Calu3 (cell line): ENCODE measurements at regions of chr21 and their contacts with region 1.

Region 1: DNA sequence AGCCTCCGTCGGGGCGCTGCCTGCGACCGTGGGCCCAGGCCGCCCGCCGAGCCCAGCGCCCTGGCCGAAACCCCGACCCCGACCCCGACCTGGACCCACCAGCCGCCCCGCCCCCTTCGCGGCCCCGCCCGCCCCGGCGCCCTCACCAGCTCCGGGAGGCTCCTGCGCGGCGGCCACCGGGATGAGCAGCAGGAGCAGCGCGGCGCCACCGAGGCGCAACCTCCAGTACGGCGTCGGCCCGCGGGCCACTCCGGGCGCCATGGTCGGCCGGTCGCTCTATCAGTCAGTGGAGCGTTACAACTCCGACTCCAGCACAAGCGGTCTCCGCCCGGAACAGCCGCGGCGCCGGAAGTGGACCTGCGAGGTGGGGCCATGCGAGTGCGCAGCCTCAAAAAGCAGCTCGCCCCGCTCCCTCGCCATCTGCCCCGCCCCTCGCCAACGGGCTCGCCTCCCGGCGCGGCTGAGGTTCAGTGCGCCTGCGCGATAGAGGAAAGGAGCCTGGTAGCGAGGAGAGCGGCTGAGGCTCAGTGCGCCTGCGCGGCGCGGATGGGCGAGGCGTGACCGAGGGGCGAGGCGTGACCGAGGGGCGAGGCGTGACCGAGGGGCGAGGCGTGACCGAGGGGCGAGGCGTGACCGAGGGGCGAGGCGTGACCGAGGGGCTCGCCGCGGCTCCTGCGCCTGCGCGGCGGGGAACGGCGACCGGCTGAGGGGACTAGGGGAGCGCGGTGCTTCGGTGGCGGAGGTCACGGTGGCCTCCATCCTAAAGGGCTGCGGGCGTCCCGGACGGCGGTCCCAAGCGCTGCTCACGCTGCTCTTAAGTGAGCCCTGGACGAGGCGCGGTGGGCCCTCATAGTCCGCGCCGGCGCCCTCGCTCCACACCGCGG is at the start of gene PTTG1IP:
- DNase-seq: peak; percentile 96
- H3K4me3 Mint-ChIP-seq: peak within 1 kb of the TSS; percentile 86
- H3K27ac Mint-ChIP-seq: peak within 1 kb of the TSS; percentile 83
- H3K4me1 Mint-ChIP-seq: peaks cover 27% of the 10 kb centered on the region
- H3K27me3 Mint-ChIP-seq: no peaks in the 10 kb centered on the region
- CTCF ChIP-seq: no peak
- total RNA-seq, gene PTTG1IP: 135 and 136 TPM in 2 replicates

Region 2: DNA sequence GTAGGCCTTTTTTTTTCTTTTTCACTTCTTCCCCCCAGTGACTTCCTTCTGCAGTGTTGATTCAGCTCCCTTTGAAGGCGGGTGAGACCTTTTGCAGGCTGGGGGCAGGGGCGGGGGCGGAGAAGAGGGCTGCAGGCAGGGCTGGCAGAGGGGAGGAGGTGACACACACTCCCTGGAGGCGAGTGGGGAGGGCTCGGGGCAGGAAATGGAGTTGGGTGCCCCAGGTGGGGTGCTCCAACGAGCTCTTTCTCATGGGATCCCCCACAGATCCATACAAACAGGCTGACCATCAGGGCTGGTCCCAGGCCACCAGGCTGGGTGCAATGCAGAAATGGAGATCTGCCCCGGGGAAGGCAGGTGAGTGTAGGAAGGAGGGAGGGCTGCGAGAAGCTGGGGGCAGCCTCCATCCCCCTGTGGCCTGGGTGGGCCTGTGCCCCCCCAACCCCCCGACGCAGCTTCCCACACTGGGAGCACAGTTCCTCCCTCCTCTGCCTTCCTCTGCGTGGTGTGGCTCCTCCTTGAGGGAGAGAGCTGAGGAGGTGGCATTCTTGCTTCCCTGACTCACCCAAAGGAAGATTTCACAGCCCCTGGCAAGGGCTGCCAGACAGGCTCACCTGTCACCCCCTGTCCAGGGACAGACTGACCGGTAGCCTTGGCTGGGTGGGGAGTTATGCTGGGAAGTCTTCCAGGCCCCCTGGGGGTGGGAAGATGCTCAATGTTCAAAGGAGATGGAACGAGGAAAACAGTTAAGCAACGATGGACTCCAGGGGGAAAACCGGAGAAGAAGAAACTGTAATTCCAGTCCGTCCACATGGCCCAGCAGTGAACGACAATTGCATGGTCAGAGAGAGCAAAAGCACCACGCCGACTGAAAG is 54.2 kb after region 1 on chr21:
- CTCF ChIA-PET with region 1: no interaction called
- intact Hi-C with region 1: loop called (anchors 5 kb)
- DNase-seq: peak; percentile 57
- H3K4me3 Mint-ChIP-seq: peak overlapping the region; percentile 32
- H3K27ac Mint-ChIP-seq: peak overlapping the region; percentile 33
- H3K4me1 Mint-ChIP-seq: peaks cover 37% of the 10 kb centered on the region
- H3K27me3 Mint-ChIP-seq: peaks cover 55% of the 10 kb centered on the region
- CTCF ChIP-seq: no peak

Region 3: GRCh38 chr21:45130324-45130774 is 256.8 kb after region 1 on chr21:
- CTCF ChIA-PET with region 1: no interaction called
- intact Hi-C with region 1: no loop called
- DNase-seq: no peak
- H3K4me3 Mint-ChIP-seq: no peak overlapping the region
- H3K27ac Mint-ChIP-seq: no peak overlapping the region
- H3K4me1 Mint-ChIP-seq: peaks cover 11% of the 10 kb centered on the region
- H3K27me3 Mint-ChIP-seq: peaks cover 19% of the 10 kb centered on the region
- CTCF ChIP-seq: no peak

Region 4: DNA sequence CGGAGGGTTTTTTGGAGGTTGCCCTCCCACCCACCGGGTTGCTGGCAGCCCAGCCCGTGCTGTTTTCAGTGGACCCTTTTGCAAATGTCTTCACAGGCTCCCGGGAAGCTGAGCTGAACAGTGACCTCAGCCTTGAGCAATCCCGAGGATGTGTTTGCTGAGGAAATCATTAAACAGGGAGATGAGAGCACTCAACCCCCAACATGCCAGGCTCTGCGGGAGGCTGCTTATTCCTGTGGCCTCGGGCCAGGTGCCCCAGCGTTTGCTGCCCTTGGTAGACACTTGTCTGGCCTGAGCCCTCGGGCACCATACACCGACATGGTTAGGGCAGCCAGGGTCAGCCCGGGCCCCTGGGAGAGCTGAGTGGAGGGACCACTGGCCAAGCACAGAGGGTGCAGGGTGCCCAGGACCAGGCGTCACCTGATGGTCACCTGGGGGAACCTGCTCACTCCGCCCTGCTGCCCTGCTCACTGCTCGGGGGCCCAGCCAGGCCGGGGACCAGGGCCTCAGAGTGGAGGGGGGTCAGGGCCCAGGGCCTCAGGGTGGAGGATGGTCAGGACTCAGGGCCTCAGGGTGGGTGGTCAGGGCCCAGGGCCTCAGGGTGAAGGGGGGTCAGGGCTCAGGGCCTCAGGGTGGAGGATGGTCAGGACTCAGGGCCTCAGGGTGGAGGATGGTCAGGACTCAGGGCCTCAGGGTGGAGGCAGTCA is 456.6 kb after region 1 on chr21:
- CTCF ChIA-PET with region 1: no interaction called
- intact Hi-C with region 1: no loop called
- DNase-seq: peak; percentile 67
- H3K4me3 Mint-ChIP-seq: peak overlapping the region; percentile 64
- H3K27ac Mint-ChIP-seq: peak overlapping the region; percentile 89
- H3K4me1 Mint-ChIP-seq: peaks cover 22% of the 10 kb centered on the region
- H3K27me3 Mint-ChIP-seq: no peaks in the 10 kb centered on the region
- CTCF ChIP-seq: no peak